PC-9 (cell line): ENCODE measurements at regions of chr18 and their contacts with region 1.

Region 1: GRCh38 chr18:63858456-63858855 is 29.0 kb upstream of the SERPINB2 start:
- DNase-seq: no peak
- H3K4me3 ChIP-seq: no peak overlapping the region
- H3K27ac ChIP-seq: no peak overlapping the region
- H3K4me1 ChIP-seq: no peaks in the 10 kb centered on the region
- H3K27me3 ChIP-seq: no peaks in the 10 kb centered on the region
- CTCF ChIP-seq: no peak

Region 2: GRCh38 chr18:63187791-63188460 is 670.5 kb before region 1 on chr18:
- CTCF ChIA-PET with region 1: interaction called, 11 read pairs
- POLR2A ChIA-PET with region 1: no interaction called
- intact Hi-C with region 1: no loop called
- DNase-seq: no peak
- H3K4me3 ChIP-seq: no peak overlapping the region
- H3K27ac ChIP-seq: no peak overlapping the region
- H3K4me1 ChIP-seq: peaks cover 8% of the 10 kb centered on the region; the same call in 1 of the 2 replicates
- H3K27me3 ChIP-seq: no peaks in the 10 kb centered on the region
- CTCF ChIP-seq: no peak

Region 3: GRCh38 chr18:63562284-63562683 is 296.2 kb before region 1 on chr18:
- CTCF ChIA-PET with region 1: no interaction called
- POLR2A ChIA-PET with region 1: no interaction called
- intact Hi-C with region 1: no loop called
- DNase-seq: no peak
- H3K4me3 ChIP-seq: no peak overlapping the region
- H3K27ac ChIP-seq: no peak overlapping the region
- H3K4me1 ChIP-seq: no peaks in the 10 kb centered on the region
- H3K27me3 ChIP-seq: no peaks in the 10 kb centered on the region
- CTCF ChIP-seq: no peak

Region 4: GRCh38 chr18:63907664-63908063 is 49.2 kb after region 1 on chr18 and contains the start of gene SERPINB10:
- CTCF ChIA-PET with region 1: no interaction called
- POLR2A ChIA-PET with region 1: no interaction called
- intact Hi-C with region 1: no loop called
- DNase-seq: no peak
- H3K4me3 ChIP-seq: no peak within 1 kb of the TSS
- H3K27ac ChIP-seq: no peak within 1 kb of the TSS
- H3K4me1 ChIP-seq: no peaks in the 10 kb centered on the region
- H3K27me3 ChIP-seq: no peaks in the 10 kb centered on the region
- CTCF ChIP-seq: no peak
- total RNA-seq, gene SERPINB10: not detected in 2 replicates